ENCODE measurements at regions of chr7 and their contacts with region 1.

Region 1: DNA sequence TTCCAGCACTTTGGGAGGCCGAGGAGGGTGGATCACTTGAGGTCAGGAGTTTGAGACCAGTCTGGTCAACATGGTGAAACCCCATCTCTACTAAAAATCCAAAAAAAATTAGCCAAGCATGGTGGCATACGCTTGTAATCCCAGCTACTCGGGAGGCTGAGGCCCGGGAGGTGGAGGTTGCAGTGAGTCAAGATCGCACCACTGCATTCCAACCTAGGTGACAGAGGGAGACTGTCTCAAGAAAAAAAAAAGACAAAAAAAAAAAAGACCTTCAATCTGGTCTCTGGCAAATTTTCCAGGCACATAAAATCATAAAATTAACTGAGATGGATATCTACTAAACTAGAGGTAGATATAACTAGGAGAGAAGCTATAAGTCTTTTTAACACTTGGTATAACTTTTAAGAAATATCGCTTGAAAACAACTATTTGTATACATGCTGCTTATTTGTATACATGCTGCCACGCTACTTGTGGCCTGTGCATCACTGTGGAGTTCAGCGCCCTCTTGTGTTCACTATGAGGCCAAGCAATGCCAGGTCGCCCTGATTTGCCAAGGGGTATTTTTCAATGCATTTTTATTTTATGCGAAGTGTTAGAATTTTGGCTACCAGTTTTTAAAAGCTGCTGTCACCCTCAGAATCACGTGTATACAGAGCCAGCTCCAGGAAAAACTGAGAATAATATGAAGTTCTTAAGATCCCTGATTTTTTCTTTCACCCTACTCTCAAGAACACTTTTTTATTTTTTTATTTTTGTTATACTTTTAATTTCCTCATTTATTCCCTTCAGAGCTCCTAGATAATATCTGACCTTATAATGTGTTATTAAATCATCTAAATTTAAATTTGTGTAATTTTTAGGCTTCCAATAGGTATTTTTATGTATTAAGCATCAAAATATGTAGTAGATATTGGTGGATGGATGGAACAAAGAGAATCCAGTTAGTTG is 26.7 kb downstream of the CYCS start:
- DNase-seq: no peak
- ATAC-seq: peak; percentile 79
- H3K4me3 ChIP-seq: no peak overlapping the region
- H3K27ac ChIP-seq: no peak overlapping the region
- H3K4me1 ChIP-seq: peaks cover 2% of the 10 kb centered on the region
- H3K27me3 ChIP-seq: no peaks in the 10 kb centered on the region
- CTCF ChIP-seq: peak; percentile 90 to 95 (median 91)
- EP300 ChIP-seq: no peak
- POLR2A ChIP-seq: no peak
- RAD21 ChIP-seq: peak; percentile 90

Region 2: DNA sequence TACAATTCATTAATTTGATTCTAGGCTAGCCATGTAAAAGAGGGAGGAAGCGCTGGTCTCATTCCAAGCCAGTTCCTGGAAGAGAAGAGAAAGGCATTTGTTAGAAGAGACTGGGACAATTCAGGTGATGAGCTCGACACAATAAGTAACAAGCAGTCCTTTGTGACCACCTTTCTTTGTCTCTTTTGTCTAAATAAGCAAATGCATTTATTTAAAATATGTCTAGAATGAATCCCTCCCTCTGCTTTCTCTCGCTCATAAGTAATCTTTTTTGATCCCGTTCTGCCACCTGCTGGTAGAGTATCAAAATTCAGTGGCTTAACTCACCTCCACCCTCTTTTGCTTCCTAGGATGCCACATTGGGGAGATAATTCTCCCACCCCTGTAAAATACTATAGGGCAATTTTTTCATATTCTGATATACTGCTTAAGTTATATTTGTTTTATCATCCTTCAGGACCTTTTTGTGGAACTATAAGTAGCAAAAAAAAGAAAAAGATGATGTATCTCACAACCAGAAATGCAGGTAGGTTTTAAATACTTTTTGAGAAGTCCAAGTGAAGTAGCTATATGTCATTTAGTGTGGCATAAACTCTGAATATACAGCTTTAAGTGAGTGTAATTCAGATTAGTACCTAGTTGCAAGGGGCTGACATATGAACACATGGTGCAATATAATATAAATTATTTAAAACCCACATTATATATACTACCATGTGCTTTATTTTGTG is 432.6 kb before region 1 on chr7:
- CTCF ChIA-PET with region 1: interaction called, 11 read pairs
- POLR2A ChIA-PET with region 1: no interaction called
- RAD21 ChIA-PET with region 1: no interaction called
- SMC1A ChIA-PET with region 1: interaction called, 3 read pairs
- in situ Hi-C with region 1: no loop called
- intact Hi-C with region 1: loop called (anchors 5 kb)
- DNase-seq: peak; percentile 27
- ATAC-seq: peak; percentile 92
- H3K4me3 ChIP-seq: no peak overlapping the region
- H3K27ac ChIP-seq: no peak overlapping the region
- H3K4me1 ChIP-seq: no peaks in the 10 kb centered on the region
- H3K27me3 ChIP-seq: no peaks in the 10 kb centered on the region
- CTCF ChIP-seq: peak; percentile 56 to 75 (median 56); a peak in 5 of 6 replicates
- EP300 ChIP-seq: no peak
- POLR2A ChIP-seq: no peak
- RAD21 ChIP-seq: peak; percentile 82

Region 3: DNA sequence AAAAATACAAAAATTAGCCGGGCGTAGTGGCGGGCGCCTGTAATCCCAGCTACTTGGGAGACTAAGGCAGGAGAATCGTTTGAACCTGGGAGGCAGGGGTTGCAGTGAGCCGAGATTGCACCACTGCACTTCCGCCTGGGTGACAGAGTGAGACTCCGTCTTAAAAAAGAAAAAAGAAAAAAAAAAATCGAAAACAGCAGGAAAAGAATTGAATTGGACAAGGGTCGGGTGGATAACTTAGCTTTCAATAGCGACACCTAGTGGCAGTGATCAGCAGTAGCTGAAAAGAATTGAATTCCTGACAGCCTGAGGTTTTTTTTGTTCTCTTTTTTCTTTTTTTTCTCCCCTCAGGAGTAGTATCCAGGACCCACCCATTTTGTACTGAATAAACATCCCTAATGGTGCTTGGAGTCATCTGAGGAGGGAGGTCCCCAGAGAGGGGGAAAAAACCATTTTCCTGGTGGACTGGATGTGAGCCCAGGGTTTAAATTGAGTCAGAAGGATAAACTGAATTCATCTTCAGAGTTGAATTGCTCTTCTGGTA is 28.4 kb before region 1 on chr7:
- CTCF ChIA-PET with region 1: interaction called, 110 read pairs
- POLR2A ChIA-PET with region 1: no interaction called
- RAD21 ChIA-PET with region 1: interaction called, 16 read pairs
- SMC1A ChIA-PET with region 1: interaction called, 34 read pairs
- in situ Hi-C with region 1: no loop called
- intact Hi-C with region 1: no loop called
- DNase-seq: no peak
- ATAC-seq: peak; percentile 79
- H3K4me3 ChIP-seq: no peak overlapping the region
- H3K27ac ChIP-seq: no peak overlapping the region
- H3K4me1 ChIP-seq: no peaks in the 10 kb centered on the region
- H3K27me3 ChIP-seq: no peaks in the 10 kb centered on the region; a peak in 1 of 4 replicates
- CTCF ChIP-seq: peak; percentile 72 to 82 (median 78)
- EP300 ChIP-seq: no peak
- POLR2A ChIP-seq: no peak
- RAD21 ChIP-seq: peak; percentile 86

Region 4: DNA sequence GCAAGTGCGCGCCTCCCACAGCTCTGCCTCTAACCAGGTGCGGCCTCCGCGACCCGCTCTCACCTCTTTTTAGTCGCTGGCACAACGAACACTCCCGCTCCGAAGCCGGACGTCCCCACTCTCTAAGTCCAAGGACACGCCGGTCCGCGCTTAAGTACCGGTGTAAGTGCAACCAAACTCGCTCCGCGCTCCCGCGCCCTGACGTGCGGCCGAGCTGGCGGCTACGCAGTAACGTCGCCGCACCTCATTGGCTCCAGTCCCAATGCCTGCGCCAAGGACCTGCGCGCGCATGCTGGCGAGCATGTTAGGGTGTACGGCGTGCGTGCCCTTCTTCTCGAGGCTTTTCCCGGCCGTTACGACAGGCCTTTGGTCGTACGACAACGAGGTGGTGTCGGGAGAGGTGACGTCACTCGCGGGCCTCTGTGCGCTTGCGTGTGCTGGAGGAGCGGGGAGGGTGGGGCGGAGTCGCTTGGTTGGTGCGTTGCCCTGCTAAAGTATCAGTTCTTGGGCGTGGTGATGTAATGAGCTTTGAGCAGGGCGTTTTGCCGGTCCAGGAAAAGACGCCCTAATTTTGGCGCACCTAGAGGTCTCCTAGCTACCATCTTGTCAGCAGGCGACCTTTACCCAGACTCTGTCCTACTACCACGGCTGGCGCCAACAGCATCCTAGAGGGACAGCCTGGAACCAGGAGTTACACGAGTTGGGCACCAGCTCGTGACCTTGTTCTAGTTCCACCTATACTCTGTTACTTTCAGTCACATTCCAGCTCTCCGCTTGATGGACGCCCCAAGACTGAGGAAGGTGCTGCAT is 27.0 kb after region 1 on chr7 and contains the start of gene CYCS:
- CTCF ChIA-PET with region 1: interaction called, 46 read pairs
- POLR2A ChIA-PET with region 1: interaction called, 5 read pairs
- RAD21 ChIA-PET with region 1: interaction called, 11 read pairs
- SMC1A ChIA-PET with region 1: interaction called, 31 read pairs
- in situ Hi-C with region 1: no loop called
- intact Hi-C with region 1: no loop called
- DNase-seq: peak; percentile 99
- ATAC-seq: peak; percentile 95
- H3K4me3 ChIP-seq: peak within 1 kb of the TSS; percentile 95
- H3K27ac ChIP-seq: peak within 1 kb of the TSS; percentile 84
- H3K4me1 ChIP-seq: peaks cover 10% of the 10 kb centered on the region; the same call in 1 of the 2 replicates
- H3K27me3 ChIP-seq: no peaks in the 10 kb centered on the region
- CTCF ChIP-seq: no peak
- EP300 ChIP-seq: no peak
- POLR2A ChIP-seq: peak; percentile 99
- RAD21 ChIP-seq: no peak
- polyA plus RNA-seq, gene CYCS: 641 to 952 TPM

Region 5: GRCh38 chr7:25143763-25144162 is 45.4 kb after region 1 on chr7:
- CTCF ChIA-PET with region 1: interaction called, 13 read pairs
- POLR2A ChIA-PET with region 1: no interaction called
- RAD21 ChIA-PET with region 1: no interaction called
- SMC1A ChIA-PET with region 1: interaction called, 3 read pairs
- in situ Hi-C with region 1: no loop called
- intact Hi-C with region 1: no loop called
- DNase-seq: no peak
- ATAC-seq: no peak
- H3K4me3 ChIP-seq: no peak overlapping the region
- H3K27ac ChIP-seq: no peak overlapping the region
- H3K4me1 ChIP-seq: no peaks in the 10 kb centered on the region
- H3K27me3 ChIP-seq: no peaks in the 10 kb centered on the region
- CTCF ChIP-seq: no peak
- EP300 ChIP-seq: no peak
- POLR2A ChIP-seq: no peak
- RAD21 ChIP-seq: no peak

Region 6: GRCh38 chr7:25158966-25159365 is 60.6 kb after region 1 on chr7:
- CTCF ChIA-PET with region 1: interaction called, 24 read pairs
- POLR2A ChIA-PET with region 1: no interaction called
- RAD21 ChIA-PET with region 1: interaction called, 6 read pairs
- SMC1A ChIA-PET with region 1: interaction called, 7 read pairs
- in situ Hi-C with region 1: no loop called
- intact Hi-C with region 1: loop called (anchors 1 kb)
- DNase-seq: no peak
- ATAC-seq: no peak
- H3K4me3 ChIP-seq: no peak overlapping the region
- H3K27ac ChIP-seq: no peak overlapping the region
- H3K4me1 ChIP-seq: no peaks in the 10 kb centered on the region
- H3K27me3 ChIP-seq: no peaks in the 10 kb centered on the region
- CTCF ChIP-seq: no peak
- EP300 ChIP-seq: no peak
- POLR2A ChIP-seq: no peak
- RAD21 ChIP-seq: no peak

Region 7: DNA sequence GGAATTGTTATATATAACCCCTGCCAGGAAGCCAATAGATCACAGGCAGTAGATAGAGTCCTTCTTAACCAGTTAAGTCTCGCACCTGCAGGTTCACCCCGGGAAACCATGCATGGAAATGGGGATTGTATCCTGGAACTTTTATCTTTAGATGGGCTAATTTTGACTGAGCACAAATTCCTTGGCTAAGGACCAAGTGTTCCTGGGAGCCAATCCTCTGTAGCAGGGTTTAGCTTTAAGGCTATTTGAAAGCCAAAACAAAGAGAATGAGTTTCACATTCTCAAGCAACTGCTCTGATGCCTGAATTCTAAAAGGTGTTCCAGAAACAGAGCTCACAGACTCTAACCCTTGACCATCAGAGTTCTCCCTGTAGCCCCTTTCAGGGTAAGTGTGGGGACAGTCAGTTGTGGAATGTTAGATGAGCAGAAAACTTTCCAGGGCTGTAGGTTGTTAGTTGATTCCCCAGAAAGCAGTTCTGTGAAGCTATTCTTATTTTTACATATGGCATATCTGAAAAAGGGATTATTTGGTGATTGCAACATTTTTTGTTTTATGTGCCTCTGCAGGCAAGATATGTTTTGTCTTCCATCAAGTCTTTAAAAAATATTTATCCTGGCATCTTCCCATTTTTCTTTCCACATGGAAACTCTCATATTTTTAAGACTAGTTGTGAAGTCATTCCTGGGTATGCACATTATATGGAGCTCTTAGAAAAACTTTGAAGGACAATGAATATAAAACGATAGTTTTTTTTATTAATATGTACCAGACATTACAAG is 146.1 kb after region 1 on chr7:
- CTCF ChIA-PET with region 1: no interaction called
- POLR2A ChIA-PET with region 1: no interaction called
- RAD21 ChIA-PET with region 1: no interaction called
- SMC1A ChIA-PET with region 1: no interaction called
- in situ Hi-C with region 1: no loop called
- intact Hi-C with region 1: no loop called
- DNase-seq: no peak
- ATAC-seq: no peak
- H3K4me3 ChIP-seq: no peak overlapping the region
- H3K27ac ChIP-seq: no peak overlapping the region
- H3K4me1 ChIP-seq: no peaks in the 10 kb centered on the region
- H3K27me3 ChIP-seq: peaks cover 2 to 9% of the 10 kb centered on the region in 2 experiments
- CTCF ChIP-seq: no peak
- EP300 ChIP-seq: no peak
- POLR2A ChIP-seq: no peak
- RAD21 ChIP-seq: no peak